ENCODE measurements at regions of chr13 and their contacts with region 1.

Region 1: DNA sequence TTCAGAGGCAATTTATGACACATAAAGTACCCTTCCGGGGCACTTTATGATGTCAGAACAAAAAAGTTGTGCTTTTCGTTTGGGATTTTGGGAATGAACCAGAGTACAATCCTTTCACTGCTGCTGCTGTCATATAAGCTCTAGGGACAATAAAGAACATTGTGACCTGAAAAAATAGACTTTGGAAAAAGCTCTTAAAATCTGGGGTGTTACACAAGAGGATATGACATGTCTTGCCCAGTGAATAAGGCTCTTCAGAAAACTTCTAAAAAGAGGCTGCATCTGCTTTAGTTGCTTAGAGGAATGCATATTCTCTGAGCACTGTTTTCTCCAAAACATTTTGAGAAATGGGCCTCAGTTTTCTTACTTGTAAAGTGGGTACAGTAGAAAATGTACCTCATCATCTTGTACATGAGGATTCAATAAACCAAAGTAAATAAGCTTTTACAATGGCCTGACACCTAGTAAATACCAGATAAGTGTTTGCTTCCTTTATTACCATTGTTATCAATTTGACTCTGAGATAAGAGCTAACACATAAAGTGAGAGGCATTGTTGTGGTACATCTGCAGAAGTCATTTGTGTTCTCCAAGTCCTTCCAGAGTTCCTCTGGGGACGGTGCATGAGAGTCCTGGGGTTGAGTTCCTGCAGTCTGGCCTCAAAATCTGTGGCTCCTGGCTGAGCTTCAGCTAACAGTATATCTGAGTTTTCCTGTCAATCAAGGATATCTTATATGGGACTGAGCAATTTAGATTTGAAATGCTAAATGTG is 67.4 kb upstream of the EDNRB start:
- DNase-seq: no peak

Region 2: DNA sequence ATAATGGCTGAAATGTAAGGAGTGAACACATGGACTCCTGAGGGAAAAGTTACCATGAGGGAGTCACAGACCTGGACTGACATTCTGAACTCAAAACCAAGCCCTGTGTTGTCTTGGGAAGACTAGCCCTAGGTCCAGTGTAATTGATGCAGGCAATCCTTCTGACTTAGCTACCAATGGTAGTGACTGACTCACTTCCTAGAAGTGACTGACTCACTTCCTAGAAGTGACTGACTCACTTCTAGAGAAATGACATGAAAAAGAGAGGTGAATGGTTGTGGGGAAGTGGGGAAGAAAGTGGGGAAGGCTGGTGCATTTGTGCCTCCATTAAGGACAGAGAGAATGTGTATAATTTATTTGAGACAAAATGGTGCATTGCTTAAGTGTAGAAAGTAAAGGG is 117.3 kb before region 1 on chr13:
- intact Hi-C with region 1: loop called in 1 of 2 experiments (anchors 5 kb)
- DNase-seq: no peak

Region 3: GRCh38 chr13:77966671-77967070 is 19.4 kb before region 1 on chr13:
- intact Hi-C with region 1: no loop called
- DNase-seq: no peak

Region 4: DNA sequence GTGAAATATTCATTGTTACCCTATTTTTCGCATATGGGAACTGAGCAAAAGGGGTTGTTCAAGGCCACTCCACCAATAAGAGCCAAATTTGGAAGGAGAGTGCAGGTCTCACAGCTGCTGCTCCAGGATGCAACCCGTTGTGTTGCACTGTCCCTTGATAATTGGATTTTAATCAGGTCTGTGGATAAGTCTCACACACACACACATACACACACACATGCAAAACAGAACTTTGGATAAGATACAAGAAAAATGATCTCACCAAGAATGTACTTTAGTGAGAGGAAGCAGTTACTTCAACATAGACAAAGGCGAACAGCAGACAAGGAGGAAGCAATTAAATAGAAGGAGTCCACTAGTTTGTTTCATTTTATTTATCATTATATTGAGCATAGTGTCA is 59.9 kb after region 1 on chr13:
- intact Hi-C with region 1: no loop called
- DNase-seq: no peak

Region 5: DNA sequence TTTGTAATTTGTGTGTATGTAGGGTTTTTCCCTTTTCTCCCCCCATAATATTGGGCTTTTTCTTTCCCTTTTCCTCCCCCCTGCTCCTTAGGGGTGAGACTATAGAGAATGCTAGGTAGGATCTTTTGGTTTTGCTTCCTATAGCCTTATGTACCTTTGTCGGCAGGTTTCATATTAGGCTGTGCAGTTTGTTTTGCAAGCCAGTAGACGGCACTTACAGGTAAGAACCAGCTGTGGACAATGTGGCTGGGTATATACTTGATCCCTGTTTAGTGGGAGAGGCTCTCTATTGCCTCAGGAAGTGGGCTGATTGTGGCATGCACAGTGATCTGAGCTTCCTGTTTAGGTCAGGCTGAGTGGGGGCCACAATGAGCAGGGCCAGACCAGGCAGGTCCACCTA is 1032.1 kb after region 1 on chr13:
- intact Hi-C with region 1: no loop called
- DNase-seq: no peak

Measured in posterior vena cava (tissue), 2 donors.